ENCODE measurements at regions of chr17 and their contacts with region 1.

Region 1: GRCh38 chr17:35969558-35970380 is 11.5 kb downstream of the CCL16 start:
- DNase-seq: peak; percentile 64

Region 2: DNA sequence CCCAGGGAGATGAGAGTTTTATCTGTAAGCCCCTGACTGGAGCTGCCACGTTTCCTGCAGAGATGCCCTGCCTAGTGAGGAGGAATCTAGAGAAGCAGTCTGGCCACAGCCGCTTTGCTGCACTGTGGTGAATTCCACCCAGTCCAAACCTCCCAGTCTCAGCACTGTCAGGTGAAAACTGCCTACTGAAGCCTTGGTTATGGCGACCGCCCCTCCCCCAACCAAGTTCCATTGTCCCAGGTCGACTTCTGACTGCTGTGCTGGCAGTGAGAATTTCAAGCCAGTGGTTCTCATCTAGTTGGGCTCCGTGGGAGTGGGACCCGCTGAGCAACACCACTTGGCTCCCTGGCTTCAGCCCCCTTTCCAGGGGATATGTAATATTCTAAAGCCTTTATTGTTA is 16.0 kb before region 1 on chr17:
- CTCF ChIA-PET with region 1: interaction called, 18 read pairs
- POLR2A ChIA-PET with region 1: no interaction called
- DNase-seq: no peak

Region 3: GRCh38 chr17:36105781-36106492 is 136.2 kb after region 1 on chr17:
- CTCF ChIA-PET with region 1: no interaction called
- POLR2A ChIA-PET with region 1: no interaction called
- DNase-seq: no peak

Region 4: GRCh38 chr17:36486204-36487194 is 516.7 kb after region 1 on chr17 and contains the start of gene ZNHIT3:
- CTCF ChIA-PET with region 1: interaction called, 12 read pairs
- POLR2A ChIA-PET with region 1: no interaction called
- DNase-seq: peak; percentile 82